ENCODE measurements at regions of chr6 and their contacts with region 1.

Region 1: GRCh38 chr6:31546962-31547726 is at the start of gene NFKBIL1:
- DNase-seq: peak; percentile 94
- H3K4me3 ChIP-seq: peak within 1 kb of the TSS; percentile 31 to 55 (median 34)
- H3K27ac ChIP-seq: peak within 1 kb of the TSS; percentile 87
- H3K4me1 ChIP-seq: peaks cover 20% of the 10 kb centered on the region
- H3K27me3 ChIP-seq: no peaks in the 10 kb centered on the region
- CTCF ChIP-seq: no peak
- POLR2A ChIP-seq: peak; percentile 55
- total RNA-seq, gene NFKBIL1: 14.6 and 15.5 TPM in 2 replicates

Region 2: GRCh38 chr6:31403283-31403989 is 143.7 kb before region 1 on chr6 and contains the start of gene MICA:
- CTCF ChIA-PET with region 1: interaction called, 5 read pairs
- POLR2A ChIA-PET with region 1: no interaction called
- dilution Hi-C with region 1: no loop called
- intact Hi-C with region 1: loop called (anchors 5 kb)
- DNase-seq: peak; percentile 90
- H3K4me3 ChIP-seq: peak within 1 kb of the TSS; percentile 22 to 57 (median 26)
- H3K27ac ChIP-seq: peak within 1 kb of the TSS; percentile 92
- H3K4me1 ChIP-seq: peaks cover 28% of the 10 kb centered on the region
- H3K27me3 ChIP-seq: no peaks in the 10 kb centered on the region
- CTCF ChIP-seq: no peak
- POLR2A ChIP-seq: peak; percentile 91
- total RNA-seq, gene MICA: 42.5 and 45.2 TPM in 2 replicates

Region 3: GRCh38 chr6:31568537-31568961 is 21.4 kb after region 1 on chr6:
- CTCF ChIA-PET with region 1: interaction called, 1,517 read pairs
- POLR2A ChIA-PET with region 1: interaction called, 3 read pairs
- dilution Hi-C with region 1: no loop called
- intact Hi-C with region 1: no loop called
- DNase-seq: no peak
- H3K4me3 ChIP-seq: no peak overlapping the region
- H3K27ac ChIP-seq: no peak overlapping the region
- H3K4me1 ChIP-seq: peaks cover 5% of the 10 kb centered on the region
- H3K27me3 ChIP-seq: no peaks in the 10 kb centered on the region
- CTCF ChIP-seq: no peak
- POLR2A ChIP-seq: no peak

Region 4: GRCh38 chr6:31619805-31620585 is 72.9 kb after region 1 on chr6:
- CTCF ChIA-PET with region 1: interaction called, 18 read pairs
- POLR2A ChIA-PET with region 1: interaction called, 3 read pairs
- dilution Hi-C with region 1: no loop called
- intact Hi-C with region 1: loop called (anchors 1 kb)
- DNase-seq: peak; percentile 100
- H3K4me3 ChIP-seq: peak overlapping the region in 2 of 3 experiments; percentile 57 to 80
- H3K27ac ChIP-seq: peak overlapping the region; percentile 95
- H3K4me1 ChIP-seq: peaks cover 13% of the 10 kb centered on the region
- H3K27me3 ChIP-seq: no peaks in the 10 kb centered on the region
- CTCF ChIP-seq: no peak
- POLR2A ChIP-seq: peak; percentile 73

Region 5: GRCh38 chr6:31680840-31681671 is 133.9 kb after region 1 on chr6 and contains the start of gene LY6G5C:
- CTCF ChIA-PET with region 1: no interaction called
- POLR2A ChIA-PET with region 1: no interaction called
- dilution Hi-C with region 1: no loop called
- intact Hi-C with region 1: loop called (anchors 1 kb)
- DNase-seq: peak; percentile 81
- H3K4me3 ChIP-seq: peak within 1 kb of the TSS; percentile 18 to 59 (median 47)
- H3K27ac ChIP-seq: peak within 1 kb of the TSS; percentile 18
- H3K4me1 ChIP-seq: peaks cover 8% of the 10 kb centered on the region
- H3K27me3 ChIP-seq: no peaks in the 10 kb centered on the region
- CTCF ChIP-seq: peak; percentile 60 to 66
- POLR2A ChIP-seq: peak; percentile 68
- total RNA-seq, gene LY6G5C: 5.2 and 8.2 TPM in 2 replicates

Region 6: GRCh38 chr6:31806465-31807272 is 259.5 kb after region 1 on chr6 and contains the start of gene LSM2:
- CTCF ChIA-PET with region 1: no interaction called
- POLR2A ChIA-PET with region 1: no interaction called
- dilution Hi-C with region 1: no loop called
- intact Hi-C with region 1: no loop called
- DNase-seq: peak; percentile 98
- H3K4me3 ChIP-seq: peak within 1 kb of the TSS; percentile 77 to 88 (median 87)
- H3K27ac ChIP-seq: peak within 1 kb of the TSS; percentile 42
- H3K4me1 ChIP-seq: peaks cover 11% of the 10 kb centered on the region
- H3K27me3 ChIP-seq: no peaks in the 10 kb centered on the region
- CTCF ChIP-seq: peak in 1 of 2 donors; percentile 25
- POLR2A ChIP-seq: peak; percentile 94
- total RNA-seq, gene LSM2: 78.1 and 78.6 TPM in 2 replicates

Region 7: DNA sequence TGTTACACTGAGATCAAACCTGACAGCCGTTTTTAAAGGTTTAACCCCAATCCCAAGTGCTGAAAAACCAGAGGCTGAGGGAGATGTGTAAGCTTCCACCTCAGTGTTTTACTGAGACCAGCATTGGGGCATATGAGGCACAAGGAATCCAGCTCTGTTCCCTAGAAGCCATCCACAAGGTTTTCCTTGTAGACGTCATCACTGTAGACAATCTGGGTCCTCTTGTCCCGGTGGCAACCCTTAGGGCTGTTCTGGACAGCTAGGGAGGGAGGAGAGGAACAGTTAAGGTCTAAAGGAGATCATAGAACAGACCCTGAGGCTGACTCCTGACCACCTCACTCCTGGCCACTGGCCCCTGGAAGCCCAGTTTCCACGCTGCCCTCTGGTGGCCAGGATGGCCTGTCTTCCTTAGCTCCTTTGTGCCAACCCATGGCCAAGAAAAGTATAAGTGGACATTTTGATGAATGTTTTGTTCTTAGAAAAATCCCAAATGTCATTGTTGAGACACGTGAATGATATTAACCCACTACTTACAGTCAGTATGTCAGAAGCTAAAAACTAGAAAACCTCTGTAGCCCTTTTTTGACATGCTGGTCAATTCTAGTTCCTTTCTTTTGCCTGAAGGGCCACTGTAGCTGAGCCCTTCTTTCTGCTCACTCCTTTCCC is 405.1 kb after region 1 on chr6:
- CTCF ChIA-PET with region 1: interaction called, 3 read pairs
- POLR2A ChIA-PET with region 1: no interaction called
- dilution Hi-C with region 1: no loop called
- intact Hi-C with region 1: loop called (anchors 2 kb)
- DNase-seq: peak; percentile 57
- H3K4me3 ChIP-seq: no peak overlapping the region
- H3K27ac ChIP-seq: no peak overlapping the region
- H3K4me1 ChIP-seq: no peaks in the 10 kb centered on the region
- H3K27me3 ChIP-seq: no peaks in the 10 kb centered on the region
- CTCF ChIP-seq: peak; percentile 82 to 83
- POLR2A ChIP-seq: no peak

Measured in endothelial cell of umbilical vein (primary cell).